Natural killer cell (primary cell): ENCODE measurements at regions of chr12 and their contacts with region 1.

Region 1: GRCh38 chr12:6533923-6534694 is at the start of gene GAPDH:
- DNase-seq: peak; percentile 81 to 90
- ATAC-seq: peak; percentile 53 to 77 (median 71)
- H3K4me3 ChIP-seq: peak within 1 kb of the TSS; percentile 99
- H3K4me3 Mint-ChIP-seq: peak within 1 kb of the TSS; percentile 97
- H3K27ac ChIP-seq: peak within 1 kb of the TSS; percentile 92
- H3K27ac Mint-ChIP-seq: peak within 1 kb of the TSS; percentile 96 to 98
- H3K4me1 ChIP-seq: peaks cover 58% of the 10 kb centered on the region
- H3K4me1 Mint-ChIP-seq: peaks cover 29 to 52% of the 10 kb centered on the region in 2 donors
- H3K27me3 ChIP-seq: no peaks in the 10 kb centered on the region
- H3K27me3 Mint-ChIP-seq: no peaks in the 10 kb centered on the region
- CTCF ChIP-seq: no peak
- total RNA-seq, gene GAPDH: 606 to 729 (median 642) TPM

Region 2: GRCh38 chr12:6062757-6063735 is 471.1 kb before region 1 on chr12:
- intact Hi-C with region 1: loop called (anchors 10 kb)
- DNase-seq: peak; percentile 43 to 79
- ATAC-seq: peak; percentile 76 to 98 (median 96)
- H3K4me3 ChIP-seq: no peak overlapping the region
- H3K4me3 Mint-ChIP-seq: no peak overlapping the region
- H3K27ac ChIP-seq: no peak overlapping the region
- H3K27ac Mint-ChIP-seq: no peak overlapping the region
- H3K4me1 ChIP-seq: no peaks in the 10 kb centered on the region
- H3K4me1 Mint-ChIP-seq: no peaks in the 10 kb centered on the region
- H3K27me3 ChIP-seq: no peaks in the 10 kb centered on the region
- H3K27me3 Mint-ChIP-seq: peaks cover 33 to 51% of the 10 kb centered on the region in 2 donors
- CTCF ChIP-seq: peak; percentile 86

Region 3: GRCh38 chr12:6323340-6323994 is 210.6 kb before region 1 on chr12:
- intact Hi-C with region 1: loop called (anchors 5 kb)
- DNase-seq: peak in 1 of 2 donors; percentile 78
- ATAC-seq: peak; percentile 87 to 91 (median 87)
- H3K4me3 ChIP-seq: no peak overlapping the region
- H3K4me3 Mint-ChIP-seq: peak overlapping the region; percentile 91
- H3K27ac ChIP-seq: peak overlapping the region; percentile 11
- H3K27ac Mint-ChIP-seq: peak overlapping the region; percentile 87 to 90
- H3K4me1 ChIP-seq: peaks cover 53% of the 10 kb centered on the region
- H3K4me1 Mint-ChIP-seq: peaks cover 55 to 69% of the 10 kb centered on the region in 2 donors
- H3K27me3 ChIP-seq: no peaks in the 10 kb centered on the region
- H3K27me3 Mint-ChIP-seq: no peaks in the 10 kb centered on the region
- CTCF ChIP-seq: peak; percentile 74

Region 4: GRCh38 chr12:6423267-6424007 is 110.7 kb before region 1 on chr12:
- intact Hi-C with region 1: loop called (anchors 1 kb)
- DNase-seq: peak; percentile 61 to 95
- ATAC-seq: peak; percentile 91 to 96 (median 93)
- H3K4me3 ChIP-seq: no peak overlapping the region
- H3K4me3 Mint-ChIP-seq: no peak overlapping the region
- H3K27ac ChIP-seq: no peak overlapping the region
- H3K27ac Mint-ChIP-seq: peak overlapping the region in 1 of 2 donors; percentile 68
- H3K4me1 ChIP-seq: peaks cover 32% of the 10 kb centered on the region
- H3K4me1 Mint-ChIP-seq: peaks cover 0 to 26% of the 10 kb centered on the region in 2 donors
- H3K27me3 ChIP-seq: no peaks in the 10 kb centered on the region
- H3K27me3 Mint-ChIP-seq: no peaks in the 10 kb centered on the region
- CTCF ChIP-seq: peak; percentile 79

Region 5: DNA sequence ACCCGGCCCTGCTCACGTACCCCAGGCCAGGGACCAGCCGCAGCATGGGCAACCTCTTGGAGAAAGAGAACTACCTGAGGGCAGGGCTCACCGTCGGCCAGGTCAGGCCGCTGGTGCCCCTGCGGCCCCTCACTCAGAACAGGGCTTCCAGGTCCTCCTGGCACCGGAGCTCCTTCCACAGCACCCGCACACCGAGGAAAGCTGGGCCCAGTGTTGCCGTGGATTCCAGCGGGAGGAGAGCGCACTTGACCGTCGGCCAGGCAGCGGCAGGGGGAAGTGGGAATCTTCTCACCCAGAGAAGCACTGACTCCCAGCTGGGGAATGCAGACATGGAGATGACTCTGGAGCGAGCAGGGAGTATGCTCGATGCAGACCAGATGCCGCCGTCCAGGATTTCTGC is 55.7 kb before region 1 on chr12:
- intact Hi-C with region 1: no loop called
- DNase-seq: no peak
- ATAC-seq: no peak
- H3K4me3 ChIP-seq: no peak overlapping the region
- H3K4me3 Mint-ChIP-seq: no peak overlapping the region
- H3K27ac ChIP-seq: no peak overlapping the region
- H3K27ac Mint-ChIP-seq: no peak overlapping the region
- H3K4me1 ChIP-seq: no peaks in the 10 kb centered on the region
- H3K4me1 Mint-ChIP-seq: no peaks in the 10 kb centered on the region
- H3K27me3 ChIP-seq: peaks cover 3% of the 10 kb centered on the region
- H3K27me3 Mint-ChIP-seq: no peaks in the 10 kb centered on the region
- CTCF ChIP-seq: no peak

Region 6: DNA sequence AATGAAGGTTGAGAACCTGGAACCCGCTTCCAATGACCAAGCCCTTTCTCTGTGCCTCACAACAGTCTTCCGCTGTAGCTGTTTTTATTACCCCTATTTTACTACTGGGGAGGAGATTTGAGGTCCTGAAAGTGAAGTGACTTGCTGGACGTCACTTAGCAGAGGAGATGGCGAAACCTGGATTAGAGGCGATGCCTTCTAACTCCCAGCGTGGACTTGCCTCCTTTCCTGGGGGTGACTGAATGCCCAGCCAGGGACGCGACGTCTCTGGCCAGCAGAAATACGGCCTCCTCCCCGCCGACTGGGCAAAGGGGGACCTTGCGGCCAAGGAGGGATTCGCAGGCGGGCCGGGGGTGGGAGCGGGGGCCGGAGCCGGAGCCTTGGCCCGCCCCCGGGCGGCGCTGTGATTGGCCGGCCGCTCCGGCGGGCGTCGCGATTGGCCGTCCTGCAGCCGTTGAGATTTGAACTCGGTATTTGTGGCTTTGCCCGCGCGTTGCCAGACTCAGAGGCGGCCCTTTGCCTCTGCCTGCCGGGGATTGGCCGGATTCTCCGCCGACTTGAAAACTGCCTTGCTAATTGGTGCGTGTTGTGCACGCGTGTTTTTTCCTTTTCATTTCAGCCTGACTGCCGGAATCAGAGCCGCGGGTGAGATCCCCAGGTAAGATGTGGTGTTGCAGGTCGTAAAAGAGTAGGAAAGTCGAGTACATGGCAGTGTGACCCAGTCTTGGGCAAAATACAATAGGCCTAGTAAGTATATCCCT is 40.4 kb before region 1 on chr12 and contains the start of gene NCAPD2:
- intact Hi-C with region 1: loop called (anchors 1 kb)
- DNase-seq: peak; percentile 90 to 97
- ATAC-seq: peak; percentile 85 to 94 (median 86)
- H3K4me3 ChIP-seq: peak within 1 kb of the TSS; percentile 81
- H3K4me3 Mint-ChIP-seq: peak within 1 kb of the TSS; percentile 94
- H3K27ac ChIP-seq: peak within 1 kb of the TSS; percentile 88
- H3K27ac Mint-ChIP-seq: peak within 1 kb of the TSS; percentile 97
- H3K4me1 ChIP-seq: peaks cover 22% of the 10 kb centered on the region
- H3K4me1 Mint-ChIP-seq: peaks cover 38% of the 10 kb centered on the region in 2 donors
- H3K27me3 ChIP-seq: no peaks in the 10 kb centered on the region
- H3K27me3 Mint-ChIP-seq: no peaks in the 10 kb centered on the region
- CTCF ChIP-seq: no peak
- total RNA-seq, gene NCAPD2: 38.8 to 53.1 (median 44.1) TPM

Region 7: GRCh38 chr12:6688999-6689882 is 155.1 kb after region 1 on chr12 and contains the start of gene ZNF384:
- intact Hi-C with region 1: no loop called
- DNase-seq: peak; percentile 89 to 98
- ATAC-seq: peak; percentile 76 to 93 (median 80)
- H3K4me3 ChIP-seq: peak within 1 kb of the TSS; percentile 63
- H3K4me3 Mint-ChIP-seq: peak within 1 kb of the TSS; percentile 92
- H3K27ac ChIP-seq: peak within 1 kb of the TSS; percentile 95
- H3K27ac Mint-ChIP-seq: peak within 1 kb of the TSS; percentile 93 to 96
- H3K4me1 ChIP-seq: peaks cover 22% of the 10 kb centered on the region
- H3K4me1 Mint-ChIP-seq: peaks cover 43 to 53% of the 10 kb centered on the region in 2 donors
- H3K27me3 ChIP-seq: no peaks in the 10 kb centered on the region
- H3K27me3 Mint-ChIP-seq: peaks cover 2 to 4% of the 10 kb centered on the region in 2 donors
- CTCF ChIP-seq: no peak
- total RNA-seq, gene ZNF384: 95.1 to 101 (median 100) TPM